ENCODE measurements at regions of chr1 and their contacts with region 1.

Region 1: GRCh38 chr1:156480411-156481192 is 20.0 kb downstream of the MEF2D start:
- DNase-seq: peak; percentile 65
- ATAC-seq: peak; percentile 87
- H3K4me3 Mint-ChIP-seq: peak overlapping the region; percentile 68
- H3K27ac Mint-ChIP-seq: peak overlapping the region; percentile 87
- H3K4me1 Mint-ChIP-seq: peaks cover 56% of the 10 kb centered on the region
- H3K27me3 Mint-ChIP-seq: no peaks in the 10 kb centered on the region
- CTCF ChIP-seq: peak; percentile 55

Region 2: DNA sequence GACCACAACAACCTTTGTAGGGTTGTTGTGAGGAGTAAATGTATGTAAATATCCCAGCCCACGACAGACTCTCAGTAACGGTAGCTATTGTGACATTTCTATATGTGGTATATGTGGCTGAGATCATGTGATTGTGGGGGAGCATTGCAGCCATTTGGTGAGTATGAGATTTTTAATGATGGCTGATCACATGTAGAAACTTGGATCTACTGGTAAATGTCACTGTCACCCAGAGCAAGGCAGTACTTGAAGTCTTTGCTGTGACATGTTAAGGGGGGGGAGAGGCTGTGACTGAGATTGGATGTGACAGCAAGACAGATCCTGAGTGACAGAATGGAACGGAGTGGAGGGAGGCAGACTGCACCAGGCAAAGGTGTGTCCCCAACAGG is 43.9 kb after region 1 on chr1:
- CTCF ChIA-PET with region 1: interaction called, 23 read pairs
- POLR2A ChIA-PET with region 1: interaction called, 12 read pairs
- intact Hi-C with region 1: no loop called
- DNase-seq: no peak
- ATAC-seq: peak; percentile 20
- H3K4me3 Mint-ChIP-seq: peak overlapping the region; percentile 44
- H3K27ac Mint-ChIP-seq: peak overlapping the region; percentile 67
- H3K4me1 Mint-ChIP-seq: peaks cover 19% of the 10 kb centered on the region
- H3K27me3 Mint-ChIP-seq: no peaks in the 10 kb centered on the region
- CTCF ChIP-seq: no peak

Region 3: DNA sequence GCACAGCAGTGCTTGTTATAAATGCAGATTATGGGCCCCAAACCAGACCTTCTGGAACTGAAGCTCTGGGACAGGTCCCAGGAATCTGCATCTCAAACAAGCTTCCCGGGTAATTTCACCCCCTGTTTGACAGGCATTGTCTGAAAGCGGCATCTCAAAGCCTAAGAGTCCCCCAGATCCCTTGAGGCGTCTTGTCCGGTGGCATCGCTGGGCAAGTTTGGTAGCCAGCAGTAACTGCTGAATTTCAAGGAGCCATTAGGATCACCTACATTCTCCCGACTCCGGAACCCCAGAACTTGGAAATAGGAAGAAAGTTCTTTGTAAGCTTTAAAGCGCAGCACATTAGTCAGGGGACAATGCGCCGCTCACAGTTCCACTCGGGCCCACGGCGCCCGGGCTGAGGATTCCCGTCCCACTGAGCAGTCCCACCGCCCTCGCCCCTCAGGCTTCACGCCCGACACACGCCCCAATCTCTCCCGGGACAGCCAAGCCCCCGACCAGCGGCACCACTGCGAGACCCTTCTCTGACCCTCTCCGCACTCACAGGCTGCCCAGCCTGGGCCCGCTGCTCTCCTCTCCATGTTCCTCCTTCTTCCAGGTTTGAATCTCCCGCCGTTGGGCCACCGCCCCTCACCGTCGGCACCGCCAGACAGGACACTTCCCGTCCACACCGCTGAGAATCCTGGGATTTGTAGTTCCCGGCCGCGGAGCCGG is 91.5 kb after region 1 on chr1 and contains the start of gene IQGAP3:
- CTCF ChIA-PET with region 1: interaction called, 5 read pairs
- POLR2A ChIA-PET with region 1: no interaction called
- intact Hi-C with region 1: loop called (anchors 2 kb)
- DNase-seq: peak; percentile 69
- ATAC-seq: peak; percentile 100
- H3K4me3 Mint-ChIP-seq: peak within 1 kb of the TSS; percentile 83
- H3K27ac Mint-ChIP-seq: peak within 1 kb of the TSS; percentile 42
- H3K4me1 Mint-ChIP-seq: peaks cover 13% of the 10 kb centered on the region
- H3K27me3 Mint-ChIP-seq: peaks cover 21% of the 10 kb centered on the region
- CTCF ChIP-seq: no peak
- total RNA-seq, gene IQGAP3: 0.22 and 0.29 TPM in 2 replicates

Region 4: DNA sequence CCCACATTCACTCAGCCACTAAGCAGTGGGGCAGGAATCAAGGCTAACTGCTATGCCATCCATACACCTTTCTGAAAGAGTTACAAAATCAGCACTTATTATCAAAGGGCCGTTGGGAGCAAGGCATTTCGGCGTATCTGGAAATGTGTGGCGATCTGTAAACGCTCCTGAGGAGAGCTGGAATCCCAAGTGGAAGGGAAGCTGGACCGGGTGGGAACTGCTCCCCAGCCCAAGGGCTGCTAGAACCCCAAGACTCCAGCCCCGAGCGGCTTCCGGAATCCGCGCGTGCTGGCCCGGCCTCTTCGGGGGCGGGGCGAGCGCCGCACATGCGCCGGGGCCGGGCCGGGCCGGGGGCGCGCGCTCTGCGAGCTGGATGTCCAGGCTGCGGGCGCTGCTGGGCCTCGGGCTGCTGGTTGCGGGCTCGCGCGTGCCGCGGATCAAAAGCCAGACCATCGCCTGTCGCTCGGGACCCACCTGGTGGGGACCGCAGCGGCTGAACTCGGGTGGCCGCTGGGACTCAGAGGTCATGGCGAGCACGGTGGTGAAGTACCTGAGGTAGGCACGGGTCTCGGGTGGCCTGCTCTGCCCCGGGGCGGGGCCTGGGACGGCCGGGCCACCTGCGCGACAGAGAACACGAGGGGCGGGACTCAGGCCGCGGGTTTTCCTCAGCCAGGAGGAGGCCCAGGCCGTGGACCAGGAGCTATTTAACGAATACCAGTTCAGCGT is 111.0 kb after region 1 on chr1 and contains the start of gene NAXE:
- CTCF ChIA-PET with region 1: interaction called, 16 read pairs
- POLR2A ChIA-PET with region 1: interaction called, 17 read pairs
- intact Hi-C with region 1: no loop called
- DNase-seq: peak; percentile 78
- ATAC-seq: peak; percentile 94
- H3K4me3 Mint-ChIP-seq: peak within 1 kb of the TSS; percentile 90
- H3K27ac Mint-ChIP-seq: peak within 1 kb of the TSS; percentile 94
- H3K4me1 Mint-ChIP-seq: peaks cover 21% of the 10 kb centered on the region
- H3K27me3 Mint-ChIP-seq: no peaks in the 10 kb centered on the region
- CTCF ChIP-seq: no peak
- total RNA-seq, gene NAXE: 75.6 and 84.5 TPM in 2 replicates

Region 5: GRCh38 chr1:156608036-156608674 is 127.6 kb after region 1 on chr1:
- CTCF ChIA-PET with region 1: interaction called, 40 read pairs
- POLR2A ChIA-PET with region 1: interaction called, 22 read pairs
- intact Hi-C with region 1: loop called (anchors 1 kb)
- DNase-seq: no peak
- ATAC-seq: peak; percentile 78
- H3K4me3 Mint-ChIP-seq: peak overlapping the region; percentile 55
- H3K27ac Mint-ChIP-seq: peak overlapping the region; percentile 73
- H3K4me1 Mint-ChIP-seq: peaks cover 27% of the 10 kb centered on the region
- H3K27me3 Mint-ChIP-seq: peaks cover 5% of the 10 kb centered on the region
- CTCF ChIP-seq: peak; percentile 45

Measured in activated B cell treated with CpG ODN at 0.5 μM for 24 hours (primary cell).